Mammary epithelial cell (primary cell): ENCODE measurements at regions of chr6 and their contacts with region 1.

Region 1: GRCh38 chr6:43980004-43980795 is 147.1 kb downstream of the MRPL14 start:
- DNase-seq: no peak
- H3K4me3 ChIP-seq: no peak overlapping the region
- H3K27ac ChIP-seq: no peak overlapping the region
- H3K4me1 ChIP-seq: no peaks in the 10 kb centered on the region
- H3K27me3 ChIP-seq: no peaks in the 10 kb centered on the region
- CTCF ChIP-seq: no peak

Region 2: GRCh38 chr6:43951063-43951755 is 29.0 kb before region 1 on chr6:
- CTCF ChIA-PET with region 1: no interaction called
- dilution Hi-C with region 1: loop called (anchors 5 kb)
- in situ Hi-C with region 1: no loop called
- intact Hi-C with region 1: no loop called
- DNase-seq: no peak
- H3K4me3 ChIP-seq: no peak overlapping the region
- H3K27ac ChIP-seq: no peak overlapping the region
- H3K4me1 ChIP-seq: no peaks in the 10 kb centered on the region
- H3K27me3 ChIP-seq: no peaks in the 10 kb centered on the region
- CTCF ChIP-seq: peak; percentile 17 to 40